Heart left ventricle (tissue), 16 donors: ENCODE measurements at regions of chr11 and their contacts with region 1.

Region 1: GRCh38 chr11:16945671-16946469 is 68.3 kb downstream of the PLEKHA7 start:
- DNase-seq: peak in 4 of 5 donors; percentile 45 to 63 (median 60)
- ATAC-seq: peak; percentile 63 to 91 (median 87)
- H3K4me3 ChIP-seq: no peak overlapping the region
- H3K27ac ChIP-seq: no peak overlapping the region
- H3K4me1 ChIP-seq: peaks cover 0 to 15% (median 0%) of the 10 kb centered on the region in 12 donors
- H3K27me3 ChIP-seq: no peaks in the 10 kb centered on the region
- CTCF ChIP-seq: peak; percentile 59 to 75 (median 66)
- POLR2A ChIP-seq: no peak

Region 2: DNA sequence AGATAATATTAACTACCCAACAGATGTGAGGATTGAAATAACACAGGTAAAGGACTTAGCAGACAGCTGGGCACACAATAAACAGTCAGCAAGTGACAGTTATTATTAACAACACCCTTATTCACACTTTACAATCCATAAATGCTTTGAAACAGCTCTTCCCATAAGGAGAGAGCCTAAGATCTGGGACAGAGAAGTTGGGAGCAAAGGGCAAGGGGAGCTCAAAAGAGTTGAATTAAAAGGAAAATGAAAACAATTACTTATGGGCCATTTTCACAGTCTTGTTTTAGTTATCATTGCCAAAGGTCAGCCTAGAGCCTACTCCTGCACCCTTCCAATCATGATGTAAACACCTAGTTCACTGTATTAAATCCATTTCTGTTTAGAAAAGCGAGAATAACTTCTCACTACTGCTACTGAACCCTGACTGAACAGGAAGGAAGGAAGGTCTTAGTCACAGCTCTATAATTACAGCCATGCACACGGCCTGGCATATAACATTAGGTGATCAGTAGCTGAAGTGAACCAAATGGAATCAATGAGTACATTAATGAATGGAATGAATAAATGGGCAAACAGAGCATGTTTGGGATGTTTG is 43.0 kb before region 1 on chr11:
- intact Hi-C with region 1: no loop called
- DNase-seq: no peak
- ATAC-seq: peak in 3 of 4 donors; percentile 33 to 52 (median 46)
- H3K4me3 ChIP-seq: no peak overlapping the region
- H3K27ac ChIP-seq: peak overlapping the region in 4 of 12 donors; percentile 10 to 56 (median 31)
- H3K4me1 ChIP-seq: peaks cover 0 to 43% (median 21%) of the 10 kb centered on the region in 12 donors
- H3K27me3 ChIP-seq: no peaks in the 10 kb centered on the region
- CTCF ChIP-seq: no peak
- POLR2A ChIP-seq: no peak

Region 3: DNA sequence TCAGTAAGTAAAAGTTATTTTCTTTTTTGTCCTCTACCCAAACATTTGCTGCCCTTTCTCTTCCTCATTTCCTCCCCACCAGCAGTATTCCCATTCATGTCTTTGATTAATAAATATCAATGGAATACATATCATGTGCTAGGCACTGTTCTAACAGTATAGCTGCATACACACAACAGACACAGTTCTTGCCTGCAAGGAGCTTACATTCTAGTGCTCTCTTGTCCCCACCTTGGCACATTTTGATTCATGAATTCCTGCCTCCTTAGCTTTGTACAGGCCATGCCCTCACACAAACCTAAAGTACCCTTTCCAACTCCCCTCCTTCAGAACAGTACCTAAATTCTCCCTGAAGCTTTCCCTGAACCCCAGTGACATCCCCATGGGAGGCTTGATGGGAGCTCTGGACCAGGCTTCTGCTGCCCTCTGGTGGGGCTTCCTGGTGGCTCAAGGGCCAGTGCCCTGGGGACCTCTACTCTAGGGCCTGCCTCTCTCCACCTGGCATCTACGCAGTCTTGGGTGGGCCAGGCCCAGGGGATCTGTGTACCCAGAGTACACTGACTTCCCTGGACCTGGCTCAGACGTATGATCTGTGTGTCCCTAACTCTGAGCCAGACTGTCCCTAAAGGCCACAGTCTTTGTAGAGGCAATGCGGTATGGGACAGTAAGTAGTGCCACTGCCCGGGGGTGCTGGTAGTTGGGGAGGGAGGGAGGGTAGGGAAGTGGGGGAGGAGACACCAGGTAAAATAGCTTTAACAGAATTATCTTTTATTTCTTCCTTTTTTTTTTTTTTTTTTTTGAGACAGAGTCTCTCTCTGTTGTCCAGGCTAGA is 117.5 kb after region 1 on chr11:
- intact Hi-C with region 1: loop called (anchors 1 to 5 kb)
- DNase-seq: peak; percentile 57 to 79 (median 68)
- ATAC-seq: peak; percentile 55 to 96 (median 94)
- H3K4me3 ChIP-seq: no peak overlapping the region
- H3K27ac ChIP-seq: no peak overlapping the region
- H3K4me1 ChIP-seq: no peaks in the 10 kb centered on the region
- H3K27me3 ChIP-seq: no peaks in the 10 kb centered on the region
- CTCF ChIP-seq: peak; percentile 59 to 89 (median 76)
- POLR2A ChIP-seq: no peak

Region 4: DNA sequence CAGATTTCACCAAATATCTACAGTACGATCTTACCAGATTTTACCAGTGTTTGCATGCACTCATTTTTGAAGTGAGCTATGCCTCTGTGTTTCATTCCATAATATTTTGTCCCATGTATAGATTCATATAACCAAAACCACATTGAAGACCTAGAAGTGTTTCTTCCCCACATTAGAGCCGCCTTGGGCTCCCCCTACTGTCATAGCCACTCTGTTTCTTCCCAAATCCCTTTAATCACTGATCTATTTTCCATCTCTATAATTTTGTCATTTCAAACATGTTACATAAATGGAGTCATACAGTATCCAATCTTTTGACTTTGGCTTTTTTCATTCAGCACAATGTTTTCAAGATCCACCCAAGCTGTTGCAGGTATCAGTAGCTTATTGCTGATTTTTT is 1199.2 kb after region 1 on chr11:
- intact Hi-C with region 1: no loop called
- DNase-seq: no peak
- ATAC-seq: no peak
- H3K4me3 ChIP-seq: no peak overlapping the region
- H3K27ac ChIP-seq: no peak overlapping the region
- H3K4me1 ChIP-seq: no peaks in the 10 kb centered on the region
- H3K27me3 ChIP-seq: peaks cover 0 to 19% (median 0%) of the 10 kb centered on the region in 9 donors
- CTCF ChIP-seq: peak in 2 of 12 donors; percentile 14 to 17
- POLR2A ChIP-seq: no peak